ENCODE measurements at regions of chr7 and their contacts with region 1.

Region 1: GRCh38 chr7:27095897-27096767 is at the start of gene HOXA1:
- DNase-seq: peak; percentile 66
- H3K4me3 Mint-ChIP-seq: peak within 1 kb of the TSS; percentile 80
- H3K27ac Mint-ChIP-seq: peak within 1 kb of the TSS; percentile 21
- H3K4me1 Mint-ChIP-seq: peaks cover 16% of the 10 kb centered on the region
- H3K27me3 Mint-ChIP-seq: peaks cover 83% of the 10 kb centered on the region
- total RNA-seq, gene HOXA1: 0.11 and 0.16 TPM in 2 replicates

Region 2: DNA sequence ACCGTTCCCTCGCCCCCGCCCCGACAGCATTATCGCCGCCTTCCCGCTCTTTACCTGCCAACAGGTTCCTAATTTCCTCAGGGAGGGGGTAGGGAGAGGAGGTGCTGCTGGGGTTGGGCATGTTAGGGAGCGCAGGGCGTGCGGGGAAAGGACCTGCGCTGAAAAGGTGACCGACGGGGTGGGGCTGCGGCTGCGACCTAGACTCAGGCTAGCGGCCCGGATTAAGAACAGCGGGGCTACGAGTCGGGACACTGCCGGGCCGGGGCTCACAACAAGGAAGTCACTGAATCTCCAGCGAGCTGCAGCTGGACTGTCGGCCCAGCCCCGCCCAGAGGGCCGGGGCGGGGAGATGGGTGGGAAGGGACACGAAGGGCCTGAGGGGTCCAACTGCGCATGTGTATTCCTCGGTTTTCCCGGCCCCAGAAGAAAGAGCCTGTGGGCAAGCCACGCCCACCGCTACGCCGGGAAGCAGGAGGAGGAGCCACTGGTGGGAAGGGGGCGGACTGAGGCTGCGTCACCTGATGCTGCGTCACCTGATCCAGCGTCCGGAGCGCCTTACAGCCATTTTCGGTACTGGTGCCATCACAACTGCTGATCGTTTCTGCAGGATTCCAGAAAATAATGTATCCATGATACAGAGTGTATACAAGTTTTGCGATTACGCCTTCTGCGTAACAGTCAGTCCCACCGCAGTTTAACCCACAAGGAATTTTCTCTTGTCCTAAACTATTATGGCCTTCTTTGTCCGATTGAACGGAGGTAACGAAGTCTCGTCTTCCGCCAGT is 231.6 kb before region 1 on chr7 and contains the start of gene SKAP2:
- intact Hi-C with region 1: loop called (anchors 2 kb)
- DNase-seq: peak; percentile 86
- H3K4me3 Mint-ChIP-seq: peak within 1 kb of the TSS; percentile 92
- H3K27ac Mint-ChIP-seq: peak within 1 kb of the TSS; percentile 65
- H3K4me1 Mint-ChIP-seq: peaks cover 15% of the 10 kb centered on the region
- H3K27me3 Mint-ChIP-seq: peaks cover 49% of the 10 kb centered on the region
- total RNA-seq, gene SKAP2: 8.2 and 9.2 TPM in 2 replicates

Region 3: GRCh38 chr7:27064159-27064558 is 32.0 kb before region 1 on chr7:
- intact Hi-C with region 1: no loop called
- DNase-seq: no peak
- H3K4me3 Mint-ChIP-seq: no peak overlapping the region
- H3K27ac Mint-ChIP-seq: no peak overlapping the region
- H3K4me1 Mint-ChIP-seq: no peaks in the 10 kb centered on the region
- H3K27me3 Mint-ChIP-seq: peaks cover 16% of the 10 kb centered on the region

Region 4: DNA sequence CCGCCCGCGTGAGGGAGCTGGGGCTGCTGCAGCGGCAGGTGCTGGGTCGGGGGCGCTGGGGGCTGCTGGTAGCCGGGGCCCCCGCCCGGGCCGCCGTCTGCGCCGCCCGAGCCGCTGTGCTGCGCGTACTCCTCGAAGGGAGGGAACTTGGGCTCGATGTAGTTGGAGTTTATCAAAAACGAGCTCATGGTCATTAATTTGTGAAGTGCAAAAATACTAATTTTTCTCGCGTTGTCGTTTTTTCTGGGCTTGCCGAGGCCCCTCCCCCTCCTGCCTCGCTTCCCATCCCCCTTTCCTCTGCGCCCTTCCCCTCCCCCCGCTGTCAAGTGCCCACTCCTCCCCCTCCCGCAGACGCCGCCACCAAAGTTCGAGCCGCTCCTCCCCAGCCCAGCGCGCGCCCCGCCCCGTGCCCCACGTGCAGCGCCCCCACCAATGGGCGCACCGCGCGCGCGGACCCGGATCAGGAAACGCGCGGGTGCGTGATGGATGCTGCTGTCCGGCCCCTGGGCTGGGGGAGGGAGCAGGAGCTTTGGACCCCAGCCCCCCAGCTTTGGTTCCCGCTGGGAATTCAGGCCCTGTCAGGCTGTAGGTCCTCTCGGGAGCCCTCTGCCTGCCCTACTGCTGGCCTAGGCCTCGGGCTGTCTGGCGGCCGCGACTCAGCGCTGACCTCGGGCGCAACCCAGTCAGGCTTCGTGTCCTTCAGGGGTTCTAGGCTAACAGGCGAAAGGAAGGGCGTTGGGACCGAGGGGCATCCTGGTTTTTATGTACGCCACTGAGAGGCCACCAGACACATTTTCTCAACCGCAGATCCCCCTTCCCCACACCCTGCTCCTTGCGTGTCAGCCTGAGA is 34.6 kb after region 1 on chr7 and contains the start of gene HOXA4:
- intact Hi-C with region 1: loop called (anchors 5 kb)
- DNase-seq: peak; percentile 67
- H3K4me3 Mint-ChIP-seq: peak within 1 kb of the TSS; percentile 59
- H3K27ac Mint-ChIP-seq: no peak within 1 kb of the TSS
- H3K4me1 Mint-ChIP-seq: peaks cover 14% of the 10 kb centered on the region
- H3K27me3 Mint-ChIP-seq: peaks cover 62% of the 10 kb centered on the region
- total RNA-seq, gene HOXA4: not detected in 2 replicates

Region 5: GRCh38 chr7:27150568-27151340 is 54.6 kb after region 1 on chr7:
- intact Hi-C with region 1: loop called (anchors 2 kb)
- DNase-seq: peak; percentile 55
- H3K4me3 Mint-ChIP-seq: peak overlapping the region; percentile 60
- H3K27ac Mint-ChIP-seq: no peak overlapping the region
- H3K4me1 Mint-ChIP-seq: peaks cover 17% of the 10 kb centered on the region
- H3K27me3 Mint-ChIP-seq: peaks cover 88% of the 10 kb centered on the region